Activated CD4-positive, alpha-beta T cell treated with anti-CD3 and anti-CD28 coated beads for 36 hours (primary cell): ENCODE measurements at regions of chr17 and their contacts with region 1.

Region 1: GRCh38 chr17:41672153-41672552 is 16.5 kb upstream of the EIF1 start:
- DNase-seq: peak; percentile 46
- ATAC-seq: peak; percentile 67
- H3K4me3 Mint-ChIP-seq: no peak overlapping the region
- H3K27ac Mint-ChIP-seq: peak overlapping the region; percentile 63
- H3K4me1 Mint-ChIP-seq: peaks cover 52% of the 10 kb centered on the region
- H3K27me3 Mint-ChIP-seq: peaks cover 2% of the 10 kb centered on the region

Region 2: GRCh38 chr17:41002814-41003213 is 669.3 kb before region 1 on chr17:
- CTCF ChIA-PET with region 1: no interaction called
- POLR2A ChIA-PET with region 1: no interaction called
- intact Hi-C with region 1: no loop called
- DNase-seq: no peak
- ATAC-seq: no peak
- H3K4me3 Mint-ChIP-seq: no peak overlapping the region
- H3K27ac Mint-ChIP-seq: no peak overlapping the region
- H3K4me1 Mint-ChIP-seq: no peaks in the 10 kb centered on the region
- H3K27me3 Mint-ChIP-seq: peaks cover 3% of the 10 kb centered on the region

Region 3: DNA sequence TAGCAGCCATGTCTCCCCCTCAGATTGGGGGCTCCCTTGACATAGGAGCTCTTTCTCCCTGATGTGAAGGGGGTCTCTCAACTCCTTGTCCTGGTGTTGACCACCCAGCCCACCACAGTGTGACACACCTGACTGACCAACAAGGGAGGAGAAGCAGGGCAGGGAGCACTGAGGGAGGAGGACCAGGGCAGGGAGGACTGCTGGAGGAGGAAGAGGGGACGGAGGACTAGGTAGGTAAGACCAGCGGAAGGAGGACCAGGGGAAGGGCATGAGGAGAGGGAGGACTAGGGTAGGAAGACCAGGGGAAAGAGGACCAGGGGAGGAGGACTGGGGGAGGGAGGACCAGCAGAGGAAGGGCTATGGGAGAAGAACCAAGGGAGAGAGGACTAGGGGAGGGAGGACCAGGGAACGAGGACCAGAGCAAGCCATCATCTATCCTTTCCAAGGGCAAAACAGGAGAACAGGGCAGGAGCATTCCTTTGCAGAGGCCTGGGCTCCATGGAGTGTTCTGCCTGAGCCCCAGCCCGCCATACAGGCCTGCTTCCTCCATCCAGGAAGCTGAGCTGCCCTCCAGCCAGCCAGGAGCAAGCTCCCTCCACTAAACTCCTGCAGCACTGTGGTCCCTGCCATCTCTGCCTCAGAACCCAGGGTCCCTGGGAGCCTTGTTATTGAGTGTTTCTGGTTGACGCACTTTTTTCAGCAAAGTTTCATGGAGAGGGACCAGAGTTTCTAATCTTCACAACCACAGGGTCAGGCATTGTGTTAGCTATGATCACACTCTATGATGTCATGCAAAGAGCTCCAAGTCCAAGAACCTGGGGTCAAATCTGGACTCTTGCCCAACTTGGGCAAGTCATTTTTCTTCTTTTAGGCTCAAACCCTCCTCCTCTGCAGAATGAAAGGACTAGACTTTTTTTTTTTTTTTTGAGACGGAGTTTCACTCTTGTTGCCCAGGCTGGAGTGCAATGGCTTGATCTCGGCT is 32.4 kb before region 1 on chr17:
- CTCF ChIA-PET with region 1: interaction called, 252 read pairs
- POLR2A ChIA-PET with region 1: interaction called, 12 read pairs
- intact Hi-C with region 1: no loop called
- DNase-seq: no peak
- ATAC-seq: no peak
- H3K4me3 Mint-ChIP-seq: no peak overlapping the region
- H3K27ac Mint-ChIP-seq: no peak overlapping the region
- H3K4me1 Mint-ChIP-seq: no peaks in the 10 kb centered on the region
- H3K27me3 Mint-ChIP-seq: no peaks in the 10 kb centered on the region